ENCODE measurements at regions of chr2 and their contacts with region 1.

Region 1: DNA sequence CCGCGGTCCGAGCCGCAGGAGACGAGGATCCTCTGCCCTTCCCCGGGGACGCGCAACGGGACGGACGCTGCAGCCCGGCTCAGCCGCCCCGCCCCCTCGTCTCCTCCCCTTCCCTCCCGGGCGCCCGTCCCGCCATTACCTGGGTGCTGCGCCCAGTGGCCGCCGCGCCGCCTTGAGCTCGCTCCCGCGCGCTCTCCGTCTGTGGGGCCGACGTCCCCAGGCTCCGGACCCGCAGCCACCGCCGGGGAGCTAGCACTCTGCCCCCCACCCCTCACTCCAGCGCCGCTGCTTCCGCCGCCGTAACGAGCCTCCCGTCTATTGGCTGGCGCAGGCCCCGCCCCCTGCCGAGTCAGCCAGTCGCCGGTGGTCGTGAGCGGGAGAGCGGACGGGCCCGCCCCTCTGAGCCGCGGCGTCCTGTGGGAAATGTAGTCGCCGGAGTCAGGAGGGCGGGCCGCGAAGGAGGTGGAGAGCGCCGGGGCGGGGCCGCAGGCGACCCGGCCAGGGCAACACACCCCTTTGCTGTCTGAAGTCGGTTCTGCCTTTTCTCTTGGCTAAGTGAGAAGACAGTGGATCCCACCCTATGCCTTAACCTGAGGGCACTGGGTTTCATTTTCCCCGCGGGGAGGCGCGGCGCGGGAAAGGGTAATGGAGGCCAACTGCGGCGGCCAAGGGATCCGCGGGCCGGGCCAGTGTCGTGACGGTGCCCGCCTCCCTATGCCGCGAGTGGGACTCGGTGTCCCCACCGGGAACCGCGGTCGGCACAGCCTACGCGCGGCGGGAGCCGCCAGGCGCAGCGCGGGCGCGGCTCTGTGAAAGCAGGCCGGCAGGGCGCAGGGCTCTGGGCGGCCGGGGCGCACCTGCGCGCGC is at the start of gene SAP130:
- DNase-seq: peak; percentile 99
- ATAC-seq: peak; percentile 96
- total RNA-seq, gene SAP130: 25.9 TPM

Region 2: DNA sequence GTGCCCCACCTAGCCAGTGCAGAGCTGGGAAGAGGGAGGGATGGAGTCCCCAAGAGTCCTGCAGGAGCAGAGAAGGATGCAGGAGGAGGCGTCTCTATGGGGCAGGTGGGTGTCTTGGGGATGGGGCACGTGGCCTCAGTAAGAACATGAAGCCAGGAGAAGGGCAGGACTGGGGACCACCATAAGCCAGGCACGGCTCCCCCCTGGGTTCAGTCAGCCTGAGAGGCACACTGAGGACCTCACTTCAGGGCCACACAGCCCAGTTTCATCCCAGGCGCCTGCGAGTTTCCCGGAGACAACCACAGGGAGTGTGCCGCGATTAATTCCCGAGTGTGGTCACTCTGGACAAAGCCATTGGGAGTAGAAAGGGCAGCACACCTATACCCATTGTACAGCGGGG is 1251.8 kb before region 1 on chr2:
- intact Hi-C with region 1: no loop called
- DNase-seq: no peak
- ATAC-seq: peak; percentile 9

Region 3: DNA sequence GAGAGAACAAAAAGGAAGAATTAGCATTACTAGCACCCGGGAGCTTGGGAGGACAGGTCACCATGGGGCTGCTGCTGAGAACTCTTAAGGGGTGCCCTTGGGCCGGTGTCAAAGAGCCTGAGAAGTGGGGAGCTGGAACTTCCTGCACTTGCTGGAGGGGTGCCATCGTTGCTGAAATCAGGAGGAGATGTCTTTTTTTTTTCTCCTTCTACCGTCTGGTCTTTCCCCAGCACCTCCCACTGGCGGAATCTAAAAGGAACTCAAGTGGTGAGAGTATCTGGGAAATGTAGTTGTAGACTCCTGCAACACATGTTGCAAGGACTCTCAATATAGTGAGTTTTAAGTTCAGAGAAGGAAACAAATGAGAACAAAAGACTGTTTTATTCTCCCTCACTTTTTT is 136.2 kb before region 1 on chr2:
- intact Hi-C with region 1: loop called (anchors 10 kb)
- DNase-seq: no peak
- ATAC-seq: no peak